OCI-LY7 (cell line): ENCODE measurements at regions of chr3 and their contacts with region 1.

Region 1: DNA sequence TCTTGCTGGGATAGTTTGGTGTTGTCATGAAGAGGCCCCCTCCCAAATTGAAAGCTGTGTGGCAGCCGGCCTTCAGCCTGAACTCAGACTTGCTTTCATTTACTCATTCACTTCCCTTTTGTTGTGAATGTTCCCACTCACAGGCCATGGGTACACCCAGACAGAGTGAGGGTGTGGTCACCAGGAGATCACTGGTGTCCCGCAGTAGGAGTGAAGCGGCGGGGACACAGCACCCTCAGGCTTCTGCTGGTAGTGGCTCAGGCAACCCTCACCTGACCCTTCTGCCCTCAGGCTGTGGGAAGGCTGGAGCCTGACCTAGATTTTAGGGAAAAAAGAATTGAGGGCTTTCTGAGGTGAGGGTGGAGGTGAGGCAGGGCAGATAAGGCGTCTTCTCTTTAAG is 244.4 kb downstream of the SOX2 start:
- DNase-seq: peak; percentile 25
- H3K4me3 ChIP-seq: peak overlapping the region; percentile 15
- H3K27ac ChIP-seq: no peak overlapping the region
- H3K4me1 ChIP-seq: peaks cover 14% of the 10 kb centered on the region
- CTCF ChIP-seq: no peak

Region 2: DNA sequence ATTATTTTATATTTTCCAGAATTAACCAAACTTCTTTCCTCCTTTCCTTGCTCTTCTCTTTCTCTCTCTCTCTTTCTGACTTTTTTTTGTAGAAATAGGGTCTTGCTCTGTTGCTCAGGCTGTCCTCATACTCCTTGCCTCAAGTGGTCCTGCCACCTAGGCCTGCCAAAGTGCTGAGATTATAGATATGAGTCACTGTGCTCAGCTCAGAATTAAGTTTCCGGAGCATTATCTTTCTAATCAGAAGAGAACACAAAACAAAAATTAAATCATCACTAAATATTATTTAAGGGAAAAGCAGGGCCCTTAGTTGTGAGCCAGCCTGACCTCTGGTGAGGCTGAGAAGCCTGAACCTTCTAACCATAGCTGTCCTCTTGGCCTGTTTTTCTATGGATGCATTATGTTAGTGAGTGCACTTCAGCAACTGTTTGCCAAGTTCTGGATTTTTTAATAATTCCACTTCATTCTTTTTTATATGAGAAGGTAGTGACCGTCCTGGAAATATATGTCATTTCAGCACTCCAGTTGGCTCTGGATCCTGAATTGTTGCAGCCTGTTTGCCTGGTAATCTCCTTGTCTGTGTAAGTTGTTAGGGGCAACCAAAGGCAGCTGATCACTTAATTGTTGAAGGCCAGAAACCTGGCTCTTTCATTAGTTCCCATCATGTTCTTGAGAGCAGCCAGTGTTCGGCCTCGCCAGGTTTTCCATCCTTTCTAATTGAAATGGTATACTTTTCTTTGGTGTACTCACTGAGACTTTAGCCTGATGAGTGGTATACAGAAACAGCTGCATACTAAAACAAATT is 76.0 kb before region 1 on chr3:
- CTCF ChIA-PET with region 1: no interaction called
- POLR2A ChIA-PET with region 1: no interaction called
- intact Hi-C with region 1: no loop called
- DNase-seq: no peak
- H3K4me3 ChIP-seq: no peak overlapping the region
- H3K27ac ChIP-seq: no peak overlapping the region
- H3K4me1 ChIP-seq: no peaks in the 10 kb centered on the region
- CTCF ChIP-seq: no peak

Region 3: GRCh38 chr3:181974198-181974597 is 18.1 kb after region 1 on chr3:
- CTCF ChIA-PET with region 1: no interaction called
- POLR2A ChIA-PET with region 1: no interaction called
- intact Hi-C with region 1: no loop called
- DNase-seq: no peak
- H3K4me3 ChIP-seq: no peak overlapping the region
- H3K27ac ChIP-seq: no peak overlapping the region
- H3K4me1 ChIP-seq: no peaks in the 10 kb centered on the region
- CTCF ChIP-seq: no peak

Region 4: GRCh38 chr3:181999314-181999713 is 43.2 kb after region 1 on chr3:
- CTCF ChIA-PET with region 1: no interaction called
- POLR2A ChIA-PET with region 1: no interaction called
- intact Hi-C with region 1: no loop called
- DNase-seq: peak; percentile 76
- H3K4me3 ChIP-seq: no peak overlapping the region
- H3K27ac ChIP-seq: peak overlapping the region; percentile 39
- H3K4me1 ChIP-seq: peaks cover 41% of the 10 kb centered on the region
- CTCF ChIP-seq: no peak

Region 5: DNA sequence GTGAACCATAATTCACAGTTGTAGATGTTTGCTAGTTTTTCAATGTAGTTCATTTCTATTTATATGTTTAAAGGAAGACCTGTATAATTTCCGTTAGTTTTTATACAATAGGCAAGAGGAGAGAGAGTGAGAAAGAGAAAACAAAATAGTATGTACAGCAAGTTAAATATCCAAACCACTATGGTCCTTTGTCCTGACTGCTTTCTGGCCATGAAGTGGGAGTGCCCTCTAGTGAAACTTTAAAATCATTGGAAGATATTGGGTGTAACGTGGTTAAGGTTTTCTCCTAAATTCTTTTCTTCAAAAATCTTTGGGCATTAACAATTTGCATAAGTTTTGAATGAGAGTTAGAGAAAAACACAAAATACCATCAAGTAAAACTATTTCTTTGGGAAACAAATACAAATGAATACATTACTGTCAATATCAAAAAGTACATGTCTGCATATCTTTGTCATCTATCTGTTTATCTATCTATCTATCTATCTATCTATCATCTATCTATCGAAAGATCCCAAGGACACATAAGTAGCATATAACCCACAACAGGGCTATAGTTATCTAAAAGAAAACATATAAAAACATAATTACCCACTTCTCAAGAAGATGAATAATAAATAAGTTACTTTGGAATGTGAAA is 302.5 kb after region 1 on chr3:
- CTCF ChIA-PET with region 1: no interaction called
- POLR2A ChIA-PET with region 1: no interaction called
- intact Hi-C with region 1: loop called (anchors 10 kb)
- DNase-seq: peak; percentile 65
- H3K4me3 ChIP-seq: no peak overlapping the region
- H3K27ac ChIP-seq: no peak overlapping the region
- H3K4me1 ChIP-seq: peaks cover 21% of the 10 kb centered on the region
- CTCF ChIP-seq: peak; percentile 93